ENCODE measurements at regions of chr4 and their contacts with region 1.

Region 1: GRCh38 chr4:22678940-22679854 is 13.5 kb upstream of the GBA3 start:
- DNase-seq: no peak
- H3K4me3 ChIP-seq: no peak overlapping the region
- H3K27ac ChIP-seq: no peak overlapping the region
- H3K4me1 ChIP-seq: no peaks in the 10 kb centered on the region
- H3K27me3 ChIP-seq: no peaks in the 10 kb centered on the region
- CTCF ChIP-seq: no peak

Region 2: GRCh38 chr4:22410645-22411247 is 268.5 kb before region 1 on chr4:
- CTCF ChIA-PET with region 1: no interaction called
- dilution Hi-C with region 1: no loop called
- in situ Hi-C with region 1: loop called in 1 of 2 experiments (anchors 25 kb)
- intact Hi-C with region 1: no loop called
- DNase-seq: no peak
- H3K4me3 ChIP-seq: no peak overlapping the region
- H3K27ac ChIP-seq: no peak overlapping the region
- H3K4me1 ChIP-seq: no peaks in the 10 kb centered on the region
- H3K27me3 ChIP-seq: no peaks in the 10 kb centered on the region
- CTCF ChIP-seq: peak; percentile 37 to 44

Measured in mammary epithelial cell (primary cell).